ENCODE measurements at regions of chr14 and their contacts with region 1.

Region 1: DNA sequence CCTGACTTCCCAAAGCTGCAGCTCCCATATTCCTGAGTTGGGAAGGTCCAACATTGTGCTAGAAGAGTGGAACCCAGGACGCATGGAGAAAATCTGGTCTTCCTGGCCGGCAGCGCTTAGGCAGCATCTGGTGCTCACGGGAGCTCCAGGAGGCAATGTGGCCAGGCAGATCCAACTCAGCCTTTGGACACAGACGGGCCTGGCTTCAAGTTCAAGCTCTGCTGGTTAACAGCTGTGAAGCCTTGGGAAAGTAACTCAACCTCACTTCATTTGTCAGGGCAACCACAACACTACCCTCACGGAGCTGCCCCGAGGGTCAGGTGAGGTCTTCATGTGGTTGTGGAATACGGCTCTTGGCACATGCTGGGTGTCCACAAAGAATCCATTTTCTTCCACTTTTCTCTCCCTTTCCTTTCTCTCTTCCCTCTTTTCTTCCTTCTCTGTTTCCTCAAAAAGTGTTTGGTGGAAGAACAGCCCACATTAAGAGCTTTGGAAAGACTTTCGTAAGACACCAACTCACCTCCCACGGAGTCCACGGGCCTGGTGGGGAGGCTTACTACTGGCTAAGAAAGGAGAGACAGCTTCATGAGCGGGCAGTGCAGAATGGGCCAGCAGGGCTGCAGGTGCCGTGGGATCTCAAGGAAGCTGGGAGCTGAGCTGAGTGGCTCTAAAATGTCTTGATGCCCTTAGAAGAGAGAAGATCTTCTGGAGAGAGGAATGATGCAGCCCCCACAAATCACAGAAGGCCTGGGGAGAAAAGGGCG is 2.4 kb upstream of the FAM181A start:
- DNase-seq: no peak
- H3K4me3 ChIP-seq: no peak overlapping the region
- H3K27ac ChIP-seq: no peak overlapping the region
- H3K4me1 ChIP-seq: no peaks in the 10 kb centered on the region
- H3K27me3 ChIP-seq: no peaks in the 10 kb centered on the region
- CTCF ChIP-seq: no peak

Region 2: GRCh38 chr14:93566065-93566693 is 358.6 kb before region 1 on chr14:
- CTCF ChIA-PET with region 1: no interaction called
- POLR2A ChIA-PET with region 1: interaction called, 12 read pairs
- intact Hi-C with region 1: no loop called
- DNase-seq: no peak
- H3K4me3 ChIP-seq: no peak overlapping the region
- H3K27ac ChIP-seq: no peak overlapping the region
- H3K4me1 ChIP-seq: no peaks in the 10 kb centered on the region
- H3K27me3 ChIP-seq: peaks cover 54% of the 10 kb centered on the region
- CTCF ChIP-seq: no peak